HEK293T (cell line): ENCODE measurements at regions of chr5 and their contacts with region 1.

Region 1: GRCh38 chr5:169980418-169981053 is at the start of gene INSYN2B:
- DNase-seq: peak; percentile 83

Region 2: GRCh38 chr5:169701910-169702451 is 278.6 kb before region 1 on chr5:
- CTCF ChIA-PET with region 1: interaction called, 35 read pairs
- POLR2A ChIA-PET with region 1: no interaction called
- DNase-seq: peak; percentile 34

Region 3: GRCh38 chr5:169706758-169707691 is 273.5 kb before region 1 on chr5:
- CTCF ChIA-PET with region 1: interaction called, 35 read pairs
- POLR2A ChIA-PET with region 1: no interaction called
- DNase-seq: no peak

Region 4: DNA sequence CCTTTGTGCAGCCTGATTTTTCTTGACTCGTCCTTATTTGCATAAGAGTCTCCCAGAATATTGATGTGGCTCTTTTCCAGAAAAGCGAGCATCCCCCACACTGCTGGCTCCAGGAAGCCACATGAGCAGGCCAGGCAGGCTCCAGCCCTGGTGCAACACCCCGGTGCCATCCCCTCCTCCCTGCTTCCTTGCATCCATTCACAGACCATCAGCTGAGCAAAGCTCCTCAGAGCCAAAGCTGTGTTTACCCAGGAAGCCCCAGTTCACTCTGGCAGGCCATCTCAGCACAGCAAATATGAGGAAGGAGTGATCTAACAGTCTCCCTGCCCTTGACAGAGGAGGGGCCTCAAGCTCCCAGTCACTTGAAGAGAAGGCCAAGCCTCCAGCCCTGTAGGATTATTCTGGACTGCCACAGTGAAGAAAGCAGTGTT is 34.7 kb before region 1 on chr5:
- CTCF ChIA-PET with region 1: no interaction called
- POLR2A ChIA-PET with region 1: no interaction called
- DNase-seq: no peak

Region 5: DNA sequence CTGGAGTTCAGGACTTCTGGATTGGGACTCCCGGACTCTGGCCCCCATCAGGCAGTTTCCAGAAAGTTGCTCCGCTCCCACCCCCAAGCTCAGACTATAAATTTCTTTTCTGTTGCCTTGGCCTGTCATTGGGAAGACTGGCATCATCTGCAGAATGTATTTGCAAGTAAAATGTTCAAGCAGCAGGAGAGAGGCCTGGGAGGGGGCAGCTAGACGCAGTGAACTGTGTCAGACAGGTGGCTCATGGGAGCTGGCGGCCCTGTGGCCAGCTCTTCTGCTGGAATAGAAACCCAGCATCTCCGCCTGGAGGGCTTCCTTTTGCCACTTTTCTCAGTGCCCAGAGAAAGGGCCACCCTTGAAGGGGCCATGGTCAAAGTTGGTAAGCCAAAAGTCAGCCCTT is 16.3 kb before region 1 on chr5:
- CTCF ChIA-PET with region 1: interaction called, 12 read pairs
- POLR2A ChIA-PET with region 1: no interaction called
- DNase-seq: no peak

Region 6: GRCh38 chr5:169999621-170000020 is 19.1 kb after region 1 on chr5:
- CTCF ChIA-PET with region 1: interaction called, 10 read pairs
- POLR2A ChIA-PET with region 1: no interaction called
- DNase-seq: no peak

Region 7: DNA sequence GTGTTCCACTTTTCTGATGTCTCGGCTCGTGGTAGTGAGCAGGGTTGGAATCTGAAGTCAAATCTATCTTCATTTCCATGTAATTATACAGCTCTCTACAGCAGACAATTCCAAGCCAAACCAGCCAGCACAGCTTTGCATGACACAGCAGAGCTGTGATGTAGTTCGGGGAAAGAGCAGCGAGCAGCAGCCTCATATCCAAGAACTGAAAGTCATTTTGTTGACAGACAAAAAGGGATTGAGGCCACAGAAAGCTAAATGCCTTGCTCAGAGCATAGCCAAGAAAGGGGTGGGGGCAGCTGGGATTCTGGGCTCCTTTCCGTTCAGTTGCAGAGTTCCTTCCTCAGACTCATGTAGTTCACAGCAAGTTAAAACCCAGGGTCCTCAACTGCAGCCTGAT is 285.0 kb after region 1 on chr5:
- CTCF ChIA-PET with region 1: no interaction called
- POLR2A ChIA-PET with region 1: no interaction called
- DNase-seq: no peak